ENCODE measurements at regions of chr7 and their contacts with region 1.

Region 1: GRCh38 chr7:108926776-108927175 is 357.1 kb downstream of the DNAJB9 start:
- DNase-seq: no peak
- ATAC-seq: no peak
- H3K4me3 ChIP-seq: no peak overlapping the region
- H3K4me3 Mint-ChIP-seq: no peak overlapping the region
- H3K27ac ChIP-seq: no peak overlapping the region
- H3K27ac Mint-ChIP-seq: no peak overlapping the region
- H3K4me1 ChIP-seq: no peaks in the 10 kb centered on the region
- H3K4me1 Mint-ChIP-seq: no peaks in the 10 kb centered on the region
- H3K27me3 ChIP-seq: no peaks in the 10 kb centered on the region
- H3K27me3 Mint-ChIP-seq: no peaks in the 10 kb centered on the region

Region 2: GRCh38 chr7:108874852-108875538 is 51.8 kb before region 1 on chr7:
- CTCF ChIA-PET with region 1: no interaction called
- POLR2A ChIA-PET with region 1: no interaction called
- intact Hi-C with region 1: loop called in 1 of 2 experiments (anchors 10 kb)
- DNase-seq: no peak
- ATAC-seq: no peak
- H3K4me3 ChIP-seq: no peak overlapping the region
- H3K4me3 Mint-ChIP-seq: no peak overlapping the region
- H3K27ac ChIP-seq: no peak overlapping the region
- H3K27ac Mint-ChIP-seq: no peak overlapping the region
- H3K4me1 ChIP-seq: no peaks in the 10 kb centered on the region
- H3K4me1 Mint-ChIP-seq: no peaks in the 10 kb centered on the region
- H3K27me3 ChIP-seq: no peaks in the 10 kb centered on the region
- H3K27me3 Mint-ChIP-seq: peaks cover 0 to 8% (median 0%) of the 10 kb centered on the region in 5 donors